Activated CD4-positive, alpha-beta memory T cell treated with anti-CD3 and anti-CD28 coated beads, Interleukin-2, amount 10 ng/mL, durations not matched to agents 7 days and 5 days (primary cell): ENCODE measurements at regions of chr4 and their contacts with region 1.

Region 1: GRCh38 chr4:55345980-55346850 is at the start of gene SRD5A3:
- DNase-seq: peak; percentile 80
- H3K4me3 Mint-ChIP-seq: peak within 1 kb of the TSS; percentile 79
- H3K27ac Mint-ChIP-seq: peak within 1 kb of the TSS; percentile 65
- H3K4me1 Mint-ChIP-seq: peaks cover 25% of the 10 kb centered on the region
- H3K27me3 Mint-ChIP-seq: no peaks in the 10 kb centered on the region
- total RNA-seq, gene SRD5A3: 11.8 to 12.0 TPM

Region 2: DNA sequence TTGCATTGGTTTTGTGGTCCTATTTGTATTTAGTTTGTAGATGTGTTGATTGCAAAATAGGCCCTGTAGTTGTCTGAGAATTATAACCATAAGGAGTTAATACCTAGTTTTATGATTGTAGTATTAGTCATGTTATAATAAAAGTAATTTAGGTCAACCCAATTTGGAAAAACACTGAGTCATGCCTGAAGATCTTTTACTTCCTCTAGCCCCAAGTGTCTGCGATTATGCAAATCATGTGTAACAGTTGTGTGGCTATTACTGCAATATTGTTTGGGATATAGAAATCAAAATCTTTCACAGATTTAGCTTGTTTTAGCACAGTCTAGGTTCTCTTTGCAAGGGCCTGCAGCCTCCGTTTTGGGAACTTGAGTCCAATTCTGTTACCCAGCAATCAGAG is 12.5 kb after region 1 on chr4:
- CTCF ChIA-PET with region 1: interaction called, 20 read pairs
- POLR2A ChIA-PET with region 1: interaction called, 4 read pairs
- DNase-seq: no peak
- H3K4me3 Mint-ChIP-seq: no peak overlapping the region
- H3K27ac Mint-ChIP-seq: no peak overlapping the region
- H3K4me1 Mint-ChIP-seq: peaks cover 15% of the 10 kb centered on the region
- H3K27me3 Mint-ChIP-seq: no peaks in the 10 kb centered on the region

Region 3: DNA sequence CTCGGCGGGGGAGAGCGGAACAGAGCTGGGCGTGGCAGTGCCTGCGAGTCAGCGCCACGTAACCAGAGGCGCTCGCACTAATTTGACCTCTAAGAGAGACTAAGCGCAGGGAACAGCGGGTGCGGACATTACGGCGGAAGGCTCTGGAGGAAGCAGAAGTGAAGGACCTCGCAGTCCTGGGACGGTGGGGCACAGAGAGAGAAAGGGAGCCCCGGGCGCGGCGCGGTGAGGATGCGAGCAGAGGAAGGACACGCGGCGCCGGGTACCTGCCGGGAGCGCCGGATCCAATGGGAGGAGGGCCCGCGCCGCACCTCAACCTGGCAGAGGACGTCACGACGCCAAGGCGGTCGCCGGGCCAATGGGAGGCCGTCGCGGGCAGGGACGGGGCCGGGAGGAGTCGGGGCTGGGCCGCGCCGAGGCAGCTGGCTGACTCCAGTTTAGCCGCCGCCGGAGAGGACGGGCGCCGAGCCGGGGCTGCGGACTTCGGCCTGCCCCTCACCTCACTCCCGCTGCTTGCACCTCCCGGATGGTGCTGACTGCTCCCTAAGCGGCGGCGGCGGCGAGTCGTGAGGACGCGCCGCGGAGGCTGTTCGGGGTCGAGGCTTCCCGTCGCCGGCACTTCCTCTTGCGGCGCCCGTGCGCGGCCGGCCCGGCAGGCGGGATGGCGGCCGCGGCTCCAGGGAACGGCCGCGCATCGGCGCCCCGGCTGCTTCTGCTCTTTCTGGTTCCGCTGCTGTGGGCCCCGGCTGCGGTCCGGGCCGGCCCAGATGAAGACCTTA is 49.5 kb after region 1 on chr4 and contains the start of gene TMEM165:
- CTCF ChIA-PET with region 1: interaction called, 56 read pairs
- POLR2A ChIA-PET with region 1: interaction called, 21 read pairs
- DNase-seq: peak; percentile 93
- H3K4me3 Mint-ChIP-seq: peak within 1 kb of the TSS; percentile 90
- H3K27ac Mint-ChIP-seq: peak within 1 kb of the TSS; percentile 90
- H3K4me1 Mint-ChIP-seq: peaks cover 44% of the 10 kb centered on the region
- H3K27me3 Mint-ChIP-seq: no peaks in the 10 kb centered on the region
- total RNA-seq, gene TMEM165: 68.2 to 70.1 TPM

Region 4: GRCh38 chr4:55546756-55547465 is 200.7 kb after region 1 on chr4 and contains the start of gene CLOCK:
- CTCF ChIA-PET with region 1: interaction called, 17 read pairs
- POLR2A ChIA-PET with region 1: interaction called, 8 read pairs
- DNase-seq: peak; percentile 83
- H3K4me3 Mint-ChIP-seq: peak within 1 kb of the TSS; percentile 85
- H3K27ac Mint-ChIP-seq: peak within 1 kb of the TSS; percentile 79
- H3K4me1 Mint-ChIP-seq: peaks cover 50% of the 10 kb centered on the region
- H3K27me3 Mint-ChIP-seq: peaks cover 27% of the 10 kb centered on the region
- total RNA-seq, gene CLOCK: 7.4 to 9.6 TPM

Region 5: DNA sequence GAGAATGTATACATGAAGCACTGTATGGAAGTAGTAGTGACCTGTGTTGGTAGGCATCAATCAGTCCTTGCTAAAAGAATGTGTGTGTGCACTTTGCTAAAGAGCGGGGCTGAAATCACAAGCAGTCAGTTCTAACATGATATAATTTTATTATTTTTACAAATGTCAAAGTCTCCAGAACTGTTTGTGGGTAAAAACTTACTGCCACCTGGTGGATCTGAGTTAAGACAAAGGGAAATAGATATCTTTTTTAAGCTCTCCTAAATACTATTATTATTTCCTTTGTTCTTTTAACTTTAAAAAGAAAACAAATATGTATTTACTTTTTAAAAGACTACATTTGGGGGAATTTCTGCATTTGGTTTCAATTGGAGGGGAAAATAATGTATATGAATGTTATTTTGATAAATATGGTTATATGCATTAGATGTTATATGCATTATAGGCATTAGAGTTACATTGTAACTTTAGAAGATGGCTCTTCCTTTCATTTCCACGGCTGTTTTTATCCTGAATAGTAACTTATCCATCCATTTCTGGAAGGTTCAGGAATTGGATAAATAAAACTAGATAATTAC is 208.3 kb after region 1 on chr4:
- CTCF ChIA-PET with region 1: interaction called, 13 read pairs
- POLR2A ChIA-PET with region 1: interaction called, 3 read pairs
- DNase-seq: no peak
- H3K4me3 Mint-ChIP-seq: no peak overlapping the region
- H3K27ac Mint-ChIP-seq: no peak overlapping the region
- H3K4me1 Mint-ChIP-seq: peaks cover 21% of the 10 kb centered on the region
- H3K27me3 Mint-ChIP-seq: peaks cover 22% of the 10 kb centered on the region

Region 6: GRCh38 chr4:55948726-55949474 is 602.7 kb after region 1 on chr4 and contains the start of gene CEP135:
- CTCF ChIA-PET with region 1: interaction called, 11 read pairs
- POLR2A ChIA-PET with region 1: interaction called, 6 read pairs
- DNase-seq: peak; percentile 95
- H3K4me3 Mint-ChIP-seq: peak within 1 kb of the TSS; percentile 78
- H3K27ac Mint-ChIP-seq: peak within 1 kb of the TSS; percentile 94
- H3K4me1 Mint-ChIP-seq: peaks cover 46% of the 10 kb centered on the region
- H3K27me3 Mint-ChIP-seq: no peaks in the 10 kb centered on the region
- total RNA-seq, gene CEP135: 18.0 to 18.8 TPM